CD8-positive, alpha-beta T cell (primary cell): ENCODE measurements at regions of chr3 and their contacts with region 1.

Region 1: GRCh38 chr3:71305231-71306206 is 278.0 kb downstream of the FOXP1 start:
- DNase-seq: peak in 4 of 9 experiments; percentile 19 to 48 (median 33)
- ATAC-seq: peak; percentile 29
- H3K4me3 ChIP-seq: peak overlapping the region; percentile 47 to 56
- H3K4me3 Mint-ChIP-seq: peak overlapping the region; percentile 89
- H3K27ac ChIP-seq: peak overlapping the region; percentile 57 to 80
- H3K27ac Mint-ChIP-seq: peak overlapping the region; percentile 96
- H3K4me1 ChIP-seq: peaks cover 71% of the 10 kb centered on the region
- H3K4me1 Mint-ChIP-seq: peaks cover 85% of the 10 kb centered on the region
- H3K27me3 ChIP-seq: no peaks in the 10 kb centered on the region
- H3K27me3 Mint-ChIP-seq: no peaks in the 10 kb centered on the region
- CTCF ChIP-seq: no peak

Region 2: GRCh38 chr3:70716832-70717231 is 588.7 kb before region 1 on chr3:
- CTCF ChIA-PET with region 1: no interaction called
- POLR2A ChIA-PET with region 1: no interaction called
- intact Hi-C with region 1: loop called in 1 of 2 experiments (anchors 10 kb)
- DNase-seq: peak in 2 of 9 experiments; percentile 2 to 21
- ATAC-seq: no peak
- H3K4me3 ChIP-seq: no peak overlapping the region
- H3K4me3 Mint-ChIP-seq: no peak overlapping the region
- H3K27ac ChIP-seq: no peak overlapping the region
- H3K27ac Mint-ChIP-seq: no peak overlapping the region
- H3K4me1 ChIP-seq: no peaks in the 10 kb centered on the region
- H3K4me1 Mint-ChIP-seq: no peaks in the 10 kb centered on the region
- H3K27me3 ChIP-seq: no peaks in the 10 kb centered on the region
- H3K27me3 Mint-ChIP-seq: no peaks in the 10 kb centered on the region
- CTCF ChIP-seq: no peak

Region 3: DNA sequence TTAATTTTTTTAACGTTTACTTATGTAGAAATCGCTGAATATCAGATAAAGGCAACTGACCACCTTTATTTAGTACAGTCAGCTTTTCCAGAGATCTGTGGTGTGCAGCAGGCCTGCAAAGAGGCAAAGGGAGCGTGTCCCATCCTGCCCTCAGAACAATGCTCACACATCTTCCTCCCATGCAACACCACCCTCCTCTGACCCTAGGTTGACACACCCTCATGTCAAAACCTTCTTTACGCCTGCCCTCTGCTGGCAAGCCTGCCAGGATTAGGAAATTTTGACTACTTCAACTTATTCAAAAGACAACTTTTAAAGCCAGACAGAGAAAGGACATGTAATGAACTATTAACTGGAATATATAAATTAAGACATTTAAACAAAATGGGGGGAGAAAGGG is 235.7 kb before region 1 on chr3:
- CTCF ChIA-PET with region 1: no interaction called
- POLR2A ChIA-PET with region 1: no interaction called
- intact Hi-C with region 1: loop called (anchors 5 kb)
- DNase-seq: peak; percentile 57 to 81 (median 72)
- ATAC-seq: peak; percentile 29
- H3K4me3 ChIP-seq: no peak overlapping the region
- H3K4me3 Mint-ChIP-seq: no peak overlapping the region
- H3K27ac ChIP-seq: no peak overlapping the region
- H3K27ac Mint-ChIP-seq: peak overlapping the region; percentile 91
- H3K4me1 ChIP-seq: peaks cover 89% of the 10 kb centered on the region
- H3K4me1 Mint-ChIP-seq: peaks cover 84% of the 10 kb centered on the region
- H3K27me3 ChIP-seq: no peaks in the 10 kb centered on the region
- H3K27me3 Mint-ChIP-seq: no peaks in the 10 kb centered on the region
- CTCF ChIP-seq: peak; percentile 67

Region 4: DNA sequence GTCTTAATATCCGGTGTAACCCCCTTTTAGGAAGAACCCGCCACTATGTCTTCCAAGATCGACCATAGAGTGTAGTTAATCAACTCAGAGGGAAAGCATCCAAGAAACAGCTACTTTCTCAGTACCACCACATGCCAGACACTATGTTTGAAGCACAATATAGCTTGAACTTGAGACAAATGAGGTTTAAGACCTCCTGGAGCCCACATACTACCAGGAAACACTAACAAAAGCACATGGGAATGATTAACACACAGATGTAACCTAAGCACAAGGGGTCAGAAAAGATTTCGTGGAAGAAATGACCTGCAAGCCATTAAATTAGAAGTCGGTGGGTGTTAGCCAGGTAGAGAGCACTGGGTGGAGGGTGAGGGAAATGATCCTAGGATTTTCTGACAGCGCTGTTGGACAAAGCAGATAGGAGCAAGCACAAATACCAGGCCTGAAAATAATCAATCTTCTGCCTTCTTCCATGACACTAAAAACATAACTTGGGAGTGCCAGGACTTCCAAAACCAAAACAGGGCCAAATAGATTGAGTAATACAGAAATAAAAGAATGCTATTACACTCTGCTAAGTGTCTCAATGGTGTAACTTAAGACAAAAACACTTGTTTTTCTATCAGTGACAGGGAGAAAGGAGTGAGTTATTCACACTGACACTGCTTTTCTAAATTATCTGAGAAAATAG is 64.3 kb after region 1 on chr3:
- CTCF ChIA-PET with region 1: no interaction called
- POLR2A ChIA-PET with region 1: interaction called, 3 read pairs
- intact Hi-C with region 1: loop called in 1 of 2 experiments (anchors 5 kb)
- DNase-seq: no peak
- ATAC-seq: no peak
- H3K4me3 ChIP-seq: no peak overlapping the region
- H3K4me3 Mint-ChIP-seq: no peak overlapping the region
- H3K27ac ChIP-seq: no peak overlapping the region
- H3K27ac Mint-ChIP-seq: peak overlapping the region; percentile 76
- H3K4me1 ChIP-seq: peaks cover 72% of the 10 kb centered on the region
- H3K4me1 Mint-ChIP-seq: peaks cover 84% of the 10 kb centered on the region
- H3K27me3 ChIP-seq: no peaks in the 10 kb centered on the region
- H3K27me3 Mint-ChIP-seq: no peaks in the 10 kb centered on the region
- CTCF ChIP-seq: no peak

Region 5: GRCh38 chr3:71487418-71487817 is 181.9 kb after region 1 on chr3:
- CTCF ChIA-PET with region 1: interaction called, 3 read pairs
- POLR2A ChIA-PET with region 1: no interaction called
- intact Hi-C with region 1: loop called in 1 of 2 experiments (anchors 2 kb)
- DNase-seq: peak in 1 of 9 experiments; percentile 56
- ATAC-seq: no peak
- H3K4me3 ChIP-seq: peak overlapping the region in 1 of 2 experiments; percentile 33
- H3K4me3 Mint-ChIP-seq: peak overlapping the region; percentile 76
- H3K27ac ChIP-seq: peak overlapping the region; percentile 71 to 92
- H3K27ac Mint-ChIP-seq: peak overlapping the region; percentile 95
- H3K4me1 ChIP-seq: peaks cover 97% of the 10 kb centered on the region
- H3K4me1 Mint-ChIP-seq: peaks cover 84% of the 10 kb centered on the region
- H3K27me3 ChIP-seq: no peaks in the 10 kb centered on the region
- H3K27me3 Mint-ChIP-seq: no peaks in the 10 kb centered on the region
- CTCF ChIP-seq: no peak